ENCODE measurements at regions of chr15 and their contacts with region 1.

Region 1: DNA sequence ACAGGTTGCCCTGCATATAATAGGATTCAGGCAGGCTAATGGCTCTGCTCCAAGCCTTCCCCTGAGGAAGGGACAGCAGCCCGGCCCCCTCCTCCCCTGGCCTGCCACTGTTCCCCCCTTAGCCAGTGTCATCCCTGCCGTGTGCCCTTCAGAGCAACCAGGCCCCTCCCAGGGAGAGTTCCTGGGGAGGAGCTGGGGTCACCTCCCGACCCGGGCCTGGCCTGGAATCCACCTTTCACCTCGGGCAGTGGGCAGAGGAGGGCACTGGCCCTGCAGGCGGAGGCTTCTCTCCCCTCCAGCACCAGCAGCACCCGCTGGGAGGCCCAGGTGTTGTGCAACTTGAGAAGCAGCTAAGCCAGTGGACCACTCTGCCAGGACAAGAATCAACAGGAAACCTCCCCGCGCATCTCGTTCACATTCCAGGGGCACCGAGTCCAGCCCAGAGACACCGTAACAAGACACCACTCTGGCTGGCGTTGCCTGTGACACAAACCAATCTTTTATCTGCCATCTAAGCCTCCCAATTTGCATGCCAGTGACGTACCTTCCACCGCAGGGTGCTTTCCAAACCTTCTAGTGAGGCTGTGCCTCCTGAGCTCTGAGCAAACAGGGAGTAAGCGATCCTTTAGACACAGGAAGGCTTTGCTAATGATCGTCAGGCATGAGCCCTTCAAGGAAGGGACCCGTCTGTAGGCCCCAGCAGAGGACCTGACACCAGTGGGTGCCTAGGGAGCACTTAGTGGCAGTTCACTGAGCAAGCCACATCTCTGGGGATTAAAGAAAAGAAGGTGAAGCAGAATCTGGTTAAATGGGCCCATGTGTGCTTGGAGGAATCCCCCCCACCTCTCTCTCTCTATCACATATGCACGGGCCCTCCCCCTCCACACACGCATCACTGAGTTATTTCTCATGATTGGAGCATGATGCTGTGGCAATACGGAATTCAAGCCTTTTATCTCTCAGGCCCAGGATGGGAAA is 98.9 kb upstream of the TLE3 start:
- DNase-seq: peak; percentile 95 to 98
- ATAC-seq: peak; percentile 85 to 86
- H3K4me3 ChIP-seq: peak overlapping the region in 1 of 4 donors; percentile 4
- H3K27ac ChIP-seq: peak overlapping the region; percentile 91 to 96 (median 94)
- H3K4me1 ChIP-seq: peaks cover 38 to 39% of the 10 kb centered on the region in 2 donors
- H3K27me3 ChIP-seq: no peaks in the 10 kb centered on the region
- CTCF ChIP-seq: peak in 2 of 5 experiments; percentile 20 to 31
- POLR2A ChIP-seq: peak; percentile 39 to 44

Region 2: GRCh38 chr15:69794645-69795461 is 401.8 kb before region 1 on chr15:
- in situ Hi-C with region 1: no loop called
- intact Hi-C with region 1: loop called (anchors 2 kb)
- DNase-seq: peak; percentile 33 to 42
- ATAC-seq: no peak
- H3K4me3 ChIP-seq: no peak overlapping the region
- H3K27ac ChIP-seq: peak overlapping the region; percentile 46 to 68 (median 60)
- H3K4me1 ChIP-seq: peaks cover 29 to 39% of the 10 kb centered on the region in 2 donors
- H3K27me3 ChIP-seq: no peaks in the 10 kb centered on the region
- CTCF ChIP-seq: no peak
- POLR2A ChIP-seq: no peak

Region 3: GRCh38 chr15:70156671-70157271 is 39.8 kb before region 1 on chr15:
- in situ Hi-C with region 1: no loop called
- intact Hi-C with region 1: loop called (anchors 1 kb)
- DNase-seq: peak; percentile 70 to 78
- ATAC-seq: peak; percentile 66 to 81
- H3K4me3 ChIP-seq: peak overlapping the region; percentile 7 to 33 (median 28)
- H3K27ac ChIP-seq: peak overlapping the region; percentile 67 to 85 (median 82)
- H3K4me1 ChIP-seq: peaks cover 33 to 45% of the 10 kb centered on the region in 2 donors
- H3K27me3 ChIP-seq: no peaks in the 10 kb centered on the region
- CTCF ChIP-seq: no peak
- POLR2A ChIP-seq: peak in 1 of 2 donors; percentile 30

Region 4: DNA sequence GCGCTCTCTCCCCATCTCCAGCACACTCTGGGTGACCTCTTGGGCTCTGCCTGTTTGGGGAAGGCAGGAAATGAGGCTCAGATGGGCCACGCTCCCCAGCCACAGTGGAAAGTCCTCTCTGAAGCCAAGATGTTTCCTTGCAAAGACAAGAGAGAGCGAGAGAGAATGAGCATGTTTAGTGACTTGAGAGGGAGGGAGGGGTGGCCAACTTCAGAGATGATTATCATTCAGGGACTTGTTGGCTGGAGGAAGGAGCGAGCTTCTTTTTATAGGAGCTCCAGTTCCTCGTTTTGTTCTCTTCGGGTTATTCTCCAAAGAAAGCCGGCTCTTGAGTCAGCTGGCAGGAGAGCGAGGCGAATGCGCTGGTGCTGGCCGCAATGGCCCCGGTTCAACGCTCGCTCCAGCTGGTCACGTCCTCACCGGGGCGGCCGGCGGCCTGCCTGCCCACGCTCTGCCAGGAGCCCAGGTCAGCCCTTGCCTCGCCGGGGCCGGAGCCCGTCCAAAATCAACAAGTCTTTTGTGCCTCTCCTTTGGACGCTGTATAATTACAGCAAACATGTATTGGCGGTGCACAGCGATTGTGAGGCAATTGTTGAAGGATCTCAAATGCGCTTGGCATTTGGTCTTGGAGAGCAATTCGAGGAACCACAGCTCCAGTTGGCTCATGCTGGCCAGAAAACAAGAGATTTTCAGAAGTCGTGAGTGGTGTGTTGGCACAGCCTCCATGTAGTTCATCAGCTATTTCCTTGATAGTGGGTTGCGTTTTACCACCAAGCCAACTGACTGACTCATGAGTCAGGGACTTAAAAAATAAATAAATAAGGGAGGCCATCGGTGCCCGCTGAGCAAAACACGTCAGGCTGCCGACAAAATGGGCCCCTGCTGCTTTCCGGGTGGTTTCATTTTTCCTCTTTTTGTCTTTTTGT is 278.1 kb after region 1 on chr15:
- in situ Hi-C with region 1: no loop called
- intact Hi-C with region 1: loop called (anchors 1 kb)
- DNase-seq: peak; percentile 49 to 57
- ATAC-seq: peak; percentile 82 to 84
- H3K4me3 ChIP-seq: peak overlapping the region; percentile 27 to 49 (median 33)
- H3K27ac ChIP-seq: peak overlapping the region; percentile 72 to 77 (median 73)
- H3K4me1 ChIP-seq: peaks cover 24 to 25% of the 10 kb centered on the region in 2 donors
- H3K27me3 ChIP-seq: no peaks in the 10 kb centered on the region
- CTCF ChIP-seq: no peak
- POLR2A ChIP-seq: no peak

Measured in gastrocnemius medialis (tissue), 4 donors.